Cardiac septum (tissue), 1 donor: ENCODE measurements at regions of chr21 and their contacts with region 1.

Region 1: GRCh38 chr21:45973659-45974072 is 7.9 kb upstream of the COL6A1 start:
- DNase-seq: peak; percentile 88

Region 2: GRCh38 chr21:44637018-44637850 is 1336.4 kb before region 1 on chr21 and contains the start of gene KRTAP10-10:
- intact Hi-C with region 1: no loop called
- DNase-seq: no peak
- total RNA-seq, gene KRTAP10-10: not detected

Region 3: DNA sequence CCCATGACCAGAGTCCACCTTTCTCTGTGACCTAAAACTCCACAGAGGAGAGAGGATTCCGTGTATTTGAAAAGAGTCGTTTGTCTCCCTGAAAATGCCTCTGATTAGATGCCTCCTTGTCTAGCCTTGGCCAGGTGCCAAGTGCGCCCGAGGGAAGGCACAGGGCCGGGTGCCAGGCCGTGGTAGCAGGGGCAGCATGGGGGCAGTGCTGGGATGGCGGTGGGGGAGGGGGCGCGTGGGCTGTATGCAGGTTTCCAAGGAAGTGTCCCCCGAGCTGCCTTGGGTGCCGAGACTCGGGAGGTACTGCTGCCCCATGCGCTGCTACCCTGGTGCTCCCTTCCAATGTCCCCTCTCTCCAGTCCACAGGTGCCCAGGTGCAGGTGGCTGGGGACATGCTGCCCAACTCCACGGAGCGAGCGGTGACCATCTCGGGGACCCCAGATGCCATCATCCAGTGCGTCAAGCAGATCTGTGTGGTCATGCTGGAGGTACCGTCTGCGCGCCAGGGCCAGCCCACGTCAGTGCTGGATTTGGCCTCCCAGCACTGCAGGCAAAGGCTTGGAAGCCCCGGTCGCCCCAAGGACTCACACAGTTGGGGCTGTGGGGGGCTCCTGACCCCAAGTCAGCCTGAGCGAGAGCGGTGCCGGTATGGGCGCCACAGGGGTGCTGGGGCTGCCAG is 63.0 kb before region 1 on chr21:
- intact Hi-C with region 1: no loop called
- DNase-seq: no peak

Region 4: DNA sequence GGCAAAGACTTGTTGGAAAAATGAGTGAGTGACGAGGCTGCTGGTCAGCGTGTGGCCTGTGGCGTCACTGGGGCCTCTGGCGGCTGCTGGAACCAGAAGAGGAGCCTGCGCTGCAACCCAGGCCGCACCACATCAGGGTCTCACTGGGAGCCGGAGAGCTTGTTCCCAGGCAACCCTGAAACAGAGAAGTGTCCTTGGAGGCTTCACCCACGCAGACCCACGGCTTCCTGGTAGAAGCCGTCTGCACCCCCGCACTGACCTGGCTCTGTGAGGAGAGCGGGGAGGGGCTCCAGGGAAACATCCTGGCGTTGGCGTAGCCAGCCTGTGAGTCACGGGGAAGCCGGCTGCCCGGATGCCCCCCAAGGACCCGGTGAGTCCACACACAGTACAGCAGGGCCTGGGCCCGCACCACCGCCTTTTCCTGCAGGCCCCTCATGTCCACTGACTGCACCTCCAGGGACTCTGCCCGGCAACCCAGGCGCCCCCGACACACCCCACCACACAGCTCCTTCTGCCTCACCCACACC is 65.3 kb after region 1 on chr21:
- intact Hi-C with region 1: loop called (anchors 5 kb)
- DNase-seq: peak; percentile 89

Region 5: DNA sequence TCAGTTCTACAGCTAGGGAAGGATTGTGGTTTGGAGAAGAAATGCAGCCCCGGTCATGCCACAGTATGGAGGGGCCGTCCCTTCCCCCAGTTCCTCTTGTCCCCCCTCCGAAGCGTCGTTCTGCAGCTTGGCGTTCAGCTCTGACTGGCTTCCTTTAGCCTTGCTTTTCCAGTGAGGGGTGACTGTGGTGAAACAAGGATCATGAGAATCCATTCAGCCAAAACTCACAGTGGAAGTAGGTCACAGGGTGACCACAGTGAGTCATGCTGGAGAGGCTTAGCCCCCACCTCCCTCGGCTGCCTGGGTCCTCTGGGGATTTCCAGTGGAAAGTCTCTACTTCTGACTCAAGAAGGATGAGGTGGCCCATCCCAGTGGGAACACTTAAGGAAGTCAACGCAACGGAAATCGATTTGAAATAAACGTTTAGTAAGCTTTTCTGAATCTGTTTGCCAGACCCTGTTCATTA is 87.0 kb after region 1 on chr21:
- intact Hi-C with region 1: loop called (anchors 10 kb)
- DNase-seq: peak; percentile 82

Region 6: GRCh38 chr21:46097336-46098293 is 123.9 kb after region 1 on chr21 and contains the start of gene COL6A2:
- intact Hi-C with region 1: loop called (anchors 2 kb)
- DNase-seq: peak; percentile 77
- total RNA-seq, gene COL6A2: 157 TPM

Region 7: DNA sequence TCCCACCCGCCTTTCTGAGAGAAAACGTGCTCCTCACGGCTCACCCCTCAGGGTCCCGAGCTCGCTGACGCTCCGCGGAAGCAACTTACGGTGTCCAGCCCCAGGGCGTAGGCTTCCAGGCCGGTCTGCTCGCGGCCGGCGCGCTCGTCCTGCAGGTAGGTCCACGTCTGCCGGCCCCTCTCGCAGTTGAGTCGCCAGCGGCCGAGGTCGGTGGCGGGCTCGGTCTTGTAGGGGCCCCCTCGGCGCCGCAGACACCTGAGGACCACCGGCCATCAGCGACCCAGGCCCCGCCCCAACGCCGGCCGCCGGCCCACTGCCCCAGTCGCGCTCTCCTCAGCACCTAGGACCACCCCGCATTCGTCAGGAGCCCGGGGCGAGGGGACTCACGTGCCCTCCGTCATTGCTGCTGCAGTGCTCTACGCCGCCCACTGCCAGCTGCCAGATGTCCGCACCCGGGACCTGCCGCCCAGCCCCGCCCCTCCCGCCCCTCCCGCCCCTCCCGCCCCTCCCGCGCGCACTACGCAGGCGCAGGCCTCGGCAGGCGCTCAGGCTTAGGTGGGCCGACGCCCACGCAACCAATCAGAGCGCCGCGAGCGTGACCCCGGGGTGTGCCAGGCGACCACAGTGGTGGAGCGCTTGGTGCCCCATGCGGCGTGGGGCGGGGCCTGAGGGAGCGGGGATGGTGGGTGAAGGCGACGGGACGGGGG is 254.8 kb after region 1 on chr21 and contains the start of gene LSS:
- intact Hi-C with region 1: loop called (anchors 5 kb)
- DNase-seq: peak; percentile 98
- total RNA-seq, gene LSS: 34.9 TPM

Region 8: DNA sequence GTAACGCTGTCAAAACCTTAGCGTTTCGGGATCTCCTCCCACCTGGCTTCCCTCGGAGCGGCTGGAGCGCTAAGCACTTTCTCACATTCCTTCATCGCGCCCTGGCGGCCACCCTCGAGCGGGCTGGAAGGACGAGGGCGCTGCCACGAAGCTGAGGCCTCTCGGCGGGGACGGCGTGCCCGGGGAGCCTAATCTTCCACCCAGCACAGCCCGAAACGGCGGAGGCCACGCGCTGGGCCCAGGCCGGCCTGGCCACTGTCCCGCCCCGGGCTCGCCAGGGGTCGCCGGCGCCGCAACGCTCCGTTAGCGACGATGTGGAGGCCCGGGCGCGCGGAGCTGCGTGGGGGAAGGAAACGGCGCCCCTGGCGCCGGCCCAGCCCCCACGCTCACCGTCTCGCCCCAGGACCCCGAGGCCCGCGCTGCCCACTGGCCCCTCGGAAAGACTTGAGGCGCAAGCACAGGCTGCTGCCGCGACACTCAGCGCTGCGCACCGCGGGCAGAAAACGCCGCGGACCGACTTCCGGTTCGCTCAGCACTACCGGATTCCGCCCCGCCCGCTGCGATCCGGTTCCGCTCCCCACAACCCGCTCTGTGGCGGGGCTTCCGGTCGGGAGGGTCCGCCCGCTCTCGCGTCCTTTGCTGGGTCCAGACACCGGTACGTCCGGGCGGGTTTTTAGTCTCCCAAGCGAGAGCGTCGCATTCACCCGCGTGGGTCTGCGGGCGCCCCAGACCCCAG is 312.3 kb after region 1 on chr21 and contains the start of gene YBEY:
- intact Hi-C with region 1: loop called (anchors 10 kb)
- DNase-seq: peak; percentile 93
- total RNA-seq, gene YBEY: 14.1 TPM

Region 9: DNA sequence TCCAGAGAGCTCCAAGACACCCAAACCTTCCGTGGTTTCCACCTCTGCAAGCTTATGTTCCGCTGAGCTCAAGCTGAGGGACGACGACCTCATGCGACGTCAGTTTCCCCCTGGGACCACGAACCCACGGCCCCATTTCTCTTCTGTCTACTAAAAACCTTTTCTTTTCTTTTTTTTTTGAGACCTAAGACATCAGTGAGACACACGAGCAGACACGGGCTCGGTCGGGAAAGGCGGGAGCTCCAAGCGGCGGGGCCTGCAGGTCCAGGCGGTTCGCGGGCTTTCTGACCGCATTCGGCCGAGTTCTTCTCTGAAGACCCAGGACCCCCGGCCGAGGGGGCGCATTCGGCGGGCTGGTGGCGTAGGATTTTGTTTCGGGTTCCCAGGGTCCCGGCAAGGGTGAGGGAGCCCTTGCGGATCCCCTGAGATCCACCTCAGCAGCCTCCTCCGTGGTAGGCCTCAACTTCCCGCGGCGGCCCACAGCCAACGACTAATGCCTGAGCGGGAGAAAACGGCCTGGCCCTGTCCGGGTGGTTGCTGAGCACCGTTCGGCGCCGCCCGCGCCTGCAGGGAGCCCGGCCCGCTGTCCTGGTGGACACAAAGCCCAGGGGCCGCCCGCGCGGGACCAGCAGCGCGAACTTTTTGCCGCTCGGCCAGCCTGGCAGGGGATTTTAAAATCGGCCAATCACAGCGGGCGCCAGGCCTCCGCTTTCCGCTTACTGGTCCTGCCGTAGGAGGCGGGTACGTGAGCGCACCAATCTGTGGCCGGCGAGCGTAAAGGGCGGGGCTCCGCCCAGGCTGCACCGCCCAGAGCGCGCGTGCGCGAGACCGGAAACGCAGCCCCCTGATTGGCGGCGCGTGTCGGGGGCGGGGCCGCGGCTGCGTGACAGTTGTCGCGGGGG is 349.8 kb after region 1 on chr21 and contains the start of gene C21orf58:
- intact Hi-C with region 1: loop called (anchors 10 kb)
- DNase-seq: peak; percentile 99
- total RNA-seq, gene C21orf58: 1.4 TPM